ENCODE measurements at regions of chr5 and their contacts with region 1.

Region 1: DNA sequence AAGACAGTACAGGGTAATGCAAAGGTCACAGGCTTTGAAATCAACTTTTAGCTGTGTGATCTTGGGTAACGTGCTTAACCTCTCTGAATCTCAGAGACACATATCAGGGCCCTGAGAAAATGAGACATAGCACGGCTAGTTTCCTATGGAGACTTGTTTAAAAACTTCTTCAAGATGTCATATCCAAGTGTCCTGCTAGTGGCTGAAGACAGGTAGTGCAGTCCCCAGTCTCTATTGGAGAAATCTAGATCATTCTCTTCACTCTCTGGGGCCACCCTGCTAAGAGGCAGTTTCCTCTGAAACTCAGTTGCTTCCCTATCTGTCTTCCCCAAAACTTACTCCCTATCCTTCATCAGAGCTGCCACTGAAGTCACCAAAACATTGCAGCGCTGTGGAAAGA is 30.3 kb upstream of the GRXCR2 start:
- DNase-seq: no peak
- H3K4me3 ChIP-seq: no peak overlapping the region
- CTCF ChIP-seq: no peak
- POLR2A ChIP-seq: no peak

Region 2: GRCh38 chr5:146007270-146007669 is 104.2 kb after region 1 on chr5:
- intact Hi-C with region 1: no loop called
- DNase-seq: no peak
- H3K4me3 ChIP-seq: no peak overlapping the region
- CTCF ChIP-seq: no peak
- POLR2A ChIP-seq: no peak

Region 3: DNA sequence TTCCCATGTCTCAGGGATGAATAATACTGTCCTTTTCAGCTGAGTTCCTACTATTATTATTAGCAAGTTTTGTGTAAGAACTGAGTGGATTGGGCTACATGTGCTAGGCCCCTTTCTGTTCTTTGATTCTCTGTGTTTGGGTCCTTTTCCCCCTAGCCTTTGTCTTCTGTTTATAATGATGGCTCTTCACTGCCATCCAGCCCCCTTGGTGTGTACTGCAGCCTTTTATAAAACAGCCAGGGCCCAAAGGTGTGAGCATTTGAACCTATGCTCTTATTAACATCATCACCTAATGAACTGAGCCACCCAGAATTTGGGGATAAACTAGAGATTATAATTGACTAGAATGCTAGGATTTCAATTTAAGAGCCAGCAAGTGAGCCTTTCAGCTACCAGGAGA is 149.7 kb after region 1 on chr5:
- intact Hi-C with region 1: loop called (anchors 10 kb)
- DNase-seq: no peak
- H3K4me3 ChIP-seq: no peak overlapping the region
- CTCF ChIP-seq: no peak
- POLR2A ChIP-seq: no peak

Region 4: GRCh38 chr5:146273109-146273508 is 370.0 kb after region 1 on chr5:
- intact Hi-C with region 1: no loop called
- DNase-seq: no peak
- H3K4me3 ChIP-seq: no peak overlapping the region
- CTCF ChIP-seq: no peak
- POLR2A ChIP-seq: no peak

Measured in lower leg skin (tissue), 4 donors.